ENCODE measurements at regions of chr15 and their contacts with region 1.

Region 1: GRCh38 chr15:41811432-41812195 is 16.3 kb upstream of the JMJD7 start:
- DNase-seq: peak; percentile 53 to 82 (median 77)
- ATAC-seq: peak; percentile 98
- H3K4me3 ChIP-seq: no peak overlapping the region
- H3K4me3 Mint-ChIP-seq: no peak overlapping the region
- H3K27ac ChIP-seq: no peak overlapping the region
- H3K27ac Mint-ChIP-seq: peak overlapping the region; percentile 14
- H3K4me1 ChIP-seq: peaks cover 17% of the 10 kb centered on the region
- H3K4me1 Mint-ChIP-seq: peaks cover 16% of the 10 kb centered on the region
- H3K27me3 ChIP-seq: no peaks in the 10 kb centered on the region
- H3K27me3 Mint-ChIP-seq: no peaks in the 10 kb centered on the region
- CTCF ChIP-seq: peak; percentile 86

Region 2: DNA sequence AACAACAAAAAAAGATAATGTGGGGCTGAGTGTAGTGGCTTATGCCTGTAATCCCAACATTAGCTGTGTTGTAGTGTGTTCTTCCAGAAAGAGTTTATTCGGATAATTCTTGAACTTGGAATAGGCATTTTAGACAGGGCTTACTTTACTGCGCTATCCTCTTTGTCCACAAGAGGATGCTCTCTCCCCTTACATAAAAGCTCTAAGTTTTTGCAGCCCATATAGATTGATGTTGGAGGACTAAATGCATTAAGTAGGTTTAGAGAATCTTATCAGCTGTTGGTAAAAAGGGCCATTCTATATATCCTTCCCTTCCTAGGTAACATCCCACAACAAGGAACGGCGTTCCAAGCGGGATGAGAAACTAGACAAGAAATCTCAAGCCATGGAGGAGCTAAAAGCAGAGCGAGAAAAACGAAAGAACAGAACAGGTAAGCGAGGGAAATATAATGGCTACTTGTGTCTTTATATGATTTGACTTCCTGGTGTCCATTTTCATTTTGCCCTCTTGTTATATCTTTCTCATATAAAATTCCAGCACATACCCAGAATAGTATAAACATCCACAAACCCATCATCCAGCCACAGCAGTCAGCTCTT is 345.7 kb before region 1 on chr15:
- CTCF ChIA-PET with region 1: interaction called, 4 read pairs
- POLR2A ChIA-PET with region 1: no interaction called
- intact Hi-C with region 1: loop called (anchors 1 to 2 kb)
- DNase-seq: peak in 3 of 9 experiments; percentile 22 to 65 (median 60)
- ATAC-seq: peak; percentile 69
- H3K4me3 ChIP-seq: no peak overlapping the region
- H3K4me3 Mint-ChIP-seq: no peak overlapping the region
- H3K27ac ChIP-seq: no peak overlapping the region
- H3K27ac Mint-ChIP-seq: peak overlapping the region; percentile 73
- H3K4me1 ChIP-seq: no peaks in the 10 kb centered on the region
- H3K4me1 Mint-ChIP-seq: peaks cover 6% of the 10 kb centered on the region
- H3K27me3 ChIP-seq: no peaks in the 10 kb centered on the region
- H3K27me3 Mint-ChIP-seq: no peaks in the 10 kb centered on the region
- CTCF ChIP-seq: peak; percentile 97

Region 3: DNA sequence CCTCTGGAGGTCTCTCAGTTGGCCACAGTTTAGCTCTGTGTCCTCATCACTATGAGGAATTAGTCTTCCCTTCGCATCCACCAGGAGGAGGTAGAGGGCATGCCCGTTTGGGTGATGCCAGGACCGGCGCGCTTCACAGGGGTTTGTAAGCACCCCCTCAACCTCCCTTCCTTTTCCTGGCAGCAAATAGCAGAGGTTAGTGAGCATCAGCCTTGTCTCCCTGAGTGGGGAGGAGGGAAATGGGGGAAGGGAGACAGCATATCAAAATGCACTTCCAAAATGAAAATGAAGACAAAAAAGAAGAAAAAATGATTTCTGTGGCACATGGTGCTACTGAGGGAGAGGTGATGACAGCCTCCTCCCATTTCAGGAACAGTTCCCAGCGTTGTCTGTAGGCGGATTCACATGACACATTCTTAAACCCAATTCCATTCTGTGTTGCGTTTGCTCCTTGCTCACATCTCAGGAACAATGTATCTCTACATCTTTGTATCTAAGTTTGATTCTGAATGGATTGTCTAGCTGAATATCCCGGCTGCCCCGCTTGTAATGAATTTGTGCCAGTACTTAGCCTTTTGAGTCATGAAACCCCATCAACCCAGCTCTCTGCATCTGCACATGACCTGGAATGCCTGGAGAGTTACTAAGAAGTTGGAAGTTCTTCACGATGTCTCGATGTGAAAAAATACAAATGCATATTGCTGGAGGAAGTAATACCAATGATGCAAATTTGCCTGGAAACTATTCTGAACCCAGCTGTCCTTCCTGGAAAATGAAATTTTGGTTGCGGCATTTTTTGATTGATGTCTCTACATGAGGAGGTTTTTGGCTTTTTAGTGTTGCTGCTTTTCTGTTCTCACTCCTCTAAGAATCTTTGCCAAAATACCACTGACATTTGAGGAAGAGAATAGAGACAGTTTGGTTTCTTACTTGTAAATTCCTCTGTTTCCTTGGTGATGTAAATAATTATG is 207.4 kb before region 1 on chr15:
- CTCF ChIA-PET with region 1: interaction called, 43 read pairs
- POLR2A ChIA-PET with region 1: no interaction called
- intact Hi-C with region 1: loop called in 1 of 2 experiments (anchors 2 kb)
- DNase-seq: peak; percentile 22 to 76 (median 59)
- ATAC-seq: peak; percentile 97
- H3K4me3 ChIP-seq: no peak overlapping the region
- H3K4me3 Mint-ChIP-seq: peak overlapping the region; percentile 53
- H3K27ac ChIP-seq: no peak overlapping the region
- H3K27ac Mint-ChIP-seq: no peak overlapping the region
- H3K4me1 ChIP-seq: peaks cover 4% of the 10 kb centered on the region
- H3K4me1 Mint-ChIP-seq: peaks cover 8% of the 10 kb centered on the region
- H3K27me3 ChIP-seq: no peaks in the 10 kb centered on the region
- H3K27me3 Mint-ChIP-seq: peaks cover 12% of the 10 kb centered on the region
- CTCF ChIP-seq: peak; percentile 71

Region 4: GRCh38 chr15:41782371-41783282 is 29.0 kb before region 1 on chr15:
- CTCF ChIA-PET with region 1: interaction called, 46 read pairs
- POLR2A ChIA-PET with region 1: no interaction called
- intact Hi-C with region 1: no loop called
- DNase-seq: no peak
- ATAC-seq: no peak
- H3K4me3 ChIP-seq: no peak overlapping the region
- H3K4me3 Mint-ChIP-seq: no peak overlapping the region
- H3K27ac ChIP-seq: no peak overlapping the region
- H3K27ac Mint-ChIP-seq: no peak overlapping the region
- H3K4me1 ChIP-seq: peaks cover 11% of the 10 kb centered on the region
- H3K4me1 Mint-ChIP-seq: peaks cover 44% of the 10 kb centered on the region
- H3K27me3 ChIP-seq: no peaks in the 10 kb centered on the region
- H3K27me3 Mint-ChIP-seq: no peaks in the 10 kb centered on the region
- CTCF ChIP-seq: no peak

Region 5: DNA sequence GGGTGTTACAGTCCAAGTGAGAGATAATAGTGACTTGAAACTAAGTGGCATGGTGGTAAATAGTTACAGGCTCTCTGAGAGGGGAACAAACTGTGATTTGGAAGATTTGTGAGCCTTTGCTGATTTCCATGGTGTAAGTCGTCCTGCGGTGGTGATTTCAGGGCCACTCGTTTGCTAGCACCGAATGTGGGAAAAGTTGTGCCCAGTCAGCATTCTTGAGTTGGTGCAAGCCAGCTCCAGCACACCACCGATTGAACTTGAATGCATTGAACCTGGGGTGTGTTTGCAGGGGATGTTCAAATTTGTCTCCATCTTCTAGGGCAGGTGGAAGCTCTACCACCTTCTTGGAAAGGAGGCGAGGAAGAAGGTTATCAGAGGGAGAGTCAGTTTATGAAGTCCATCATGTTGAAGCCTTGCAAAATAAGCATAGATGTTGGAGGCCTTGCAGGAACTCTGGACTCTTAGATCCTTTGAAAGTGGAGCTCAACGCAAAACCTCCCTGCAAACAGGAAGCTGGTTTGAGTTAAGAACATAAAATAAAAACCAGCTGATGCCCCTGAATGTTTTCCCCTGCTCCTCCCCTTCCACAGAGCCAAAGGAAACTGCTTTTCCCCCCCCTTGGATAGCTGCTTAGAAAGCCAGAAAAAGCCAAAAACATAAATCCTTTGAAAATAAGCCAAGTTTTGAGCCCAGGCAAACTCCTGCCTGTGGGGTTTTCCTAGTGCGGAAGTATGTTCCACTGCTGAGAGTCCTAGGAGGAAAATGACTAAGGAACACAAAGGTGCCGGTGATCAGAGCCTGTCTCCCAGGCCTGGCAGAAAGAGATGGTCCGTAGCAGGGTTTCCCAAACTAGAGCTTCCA is 15.4 kb before region 1 on chr15:
- CTCF ChIA-PET with region 1: interaction called, 31 read pairs
- POLR2A ChIA-PET with region 1: no interaction called
- intact Hi-C with region 1: no loop called
- DNase-seq: no peak
- ATAC-seq: no peak
- H3K4me3 ChIP-seq: no peak overlapping the region
- H3K4me3 Mint-ChIP-seq: no peak overlapping the region
- H3K27ac ChIP-seq: no peak overlapping the region
- H3K27ac Mint-ChIP-seq: peak overlapping the region; percentile 62
- H3K4me1 ChIP-seq: peaks cover 12% of the 10 kb centered on the region
- H3K4me1 Mint-ChIP-seq: peaks cover 28% of the 10 kb centered on the region
- H3K27me3 ChIP-seq: no peaks in the 10 kb centered on the region
- H3K27me3 Mint-ChIP-seq: no peaks in the 10 kb centered on the region
- CTCF ChIP-seq: no peak